Heart left ventricle (tissue), 16 donors: ENCODE measurements at regions of chr7 and their contacts with region 1.

Region 1: DNA sequence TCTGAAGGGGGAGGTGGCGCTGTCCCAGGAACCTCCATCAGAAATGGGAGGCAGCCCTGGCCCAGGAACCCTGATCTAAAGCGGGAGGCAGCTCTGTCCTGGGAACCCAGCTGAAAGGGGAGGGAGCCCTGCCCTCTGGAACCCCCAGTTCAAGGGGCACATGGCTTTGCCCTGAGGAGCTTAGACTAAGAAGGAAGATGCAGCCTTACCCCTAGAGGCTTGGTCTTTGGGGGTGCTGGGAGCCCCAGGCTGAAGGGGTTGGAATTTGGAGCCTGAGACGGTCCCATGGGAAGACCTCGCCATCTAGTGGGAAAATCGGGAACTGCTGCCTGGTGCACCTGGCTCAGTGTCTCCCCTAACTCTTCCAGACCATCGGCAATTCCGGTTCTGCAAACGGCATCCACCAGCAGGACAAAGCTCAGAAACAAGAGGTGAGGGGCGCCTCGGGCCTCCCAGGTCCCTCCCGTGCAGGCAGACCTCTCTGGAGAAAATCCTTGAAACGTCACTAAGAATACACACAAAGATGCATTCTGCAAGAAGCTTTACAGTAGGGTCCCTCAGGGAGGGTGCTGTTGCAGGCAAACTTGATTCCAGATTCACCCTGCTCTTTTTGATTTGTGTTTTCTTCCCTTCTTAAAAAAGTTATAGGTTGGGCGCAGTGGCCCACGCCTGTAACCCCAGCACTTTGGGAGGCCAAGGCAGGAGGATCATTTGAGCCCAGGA is 52.4 kb upstream of the GTF2IRD1 start:
- DNase-seq: peak; percentile 47 to 72 (median 59)
- ATAC-seq: peak in 3 of 4 donors; percentile 58 to 65 (median 62)
- H3K4me3 ChIP-seq: no peak overlapping the region
- H3K27ac ChIP-seq: no peak overlapping the region
- H3K4me1 ChIP-seq: no peaks in the 10 kb centered on the region
- H3K27me3 ChIP-seq: no peaks in the 10 kb centered on the region
- CTCF ChIP-seq: peak; percentile 91 to 98 (median 96)
- POLR2A ChIP-seq: no peak

Region 2: DNA sequence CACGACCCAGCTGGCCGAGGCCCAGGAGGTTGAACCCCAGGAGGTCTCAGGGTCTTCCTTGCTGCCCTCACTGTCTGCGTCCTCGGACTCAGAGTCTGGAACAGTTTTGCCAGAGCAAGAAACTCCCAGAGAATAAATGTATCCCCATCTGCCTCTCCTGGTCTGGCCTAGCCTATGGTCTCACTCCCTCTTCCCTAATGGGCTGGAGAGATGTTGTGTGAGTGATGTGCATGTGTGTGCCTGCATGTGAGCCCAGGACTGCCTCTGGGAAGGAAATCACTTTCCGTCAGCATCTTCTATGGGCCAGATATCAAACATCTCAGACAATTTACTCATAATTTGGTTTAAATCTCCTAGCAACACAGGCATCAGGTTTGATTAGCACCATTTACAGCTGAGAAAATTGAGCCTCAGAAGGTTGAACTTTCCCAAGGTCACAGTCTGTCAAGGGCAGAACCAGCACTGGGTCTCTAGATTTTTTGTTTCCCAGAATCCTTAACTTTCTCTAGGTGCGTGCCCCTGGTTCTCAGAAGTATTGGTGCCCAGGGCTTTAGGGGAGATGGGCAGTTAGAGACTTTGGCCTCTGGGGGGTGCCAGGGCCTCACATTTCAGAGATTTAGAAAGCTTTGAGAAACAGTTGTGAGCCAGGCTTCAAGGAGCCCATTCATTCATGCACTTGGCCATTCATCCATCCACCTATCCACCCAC is 535.4 kb before region 1 on chr7:
- intact Hi-C with region 1: loop called in 6 of 10 experiments (anchors 5 to 10 kb)
- DNase-seq: peak in 1 of 5 donors; percentile 57
- ATAC-seq: peak; percentile 39 to 77 (median 76)
- H3K4me3 ChIP-seq: no peak overlapping the region
- H3K27ac ChIP-seq: no peak overlapping the region
- H3K4me1 ChIP-seq: peaks cover 0 to 17% (median 8%) of the 10 kb centered on the region in 12 donors
- H3K27me3 ChIP-seq: no peaks in the 10 kb centered on the region
- CTCF ChIP-seq: peak; percentile 55 to 77 (median 68)
- POLR2A ChIP-seq: no peak

Region 3: GRCh38 chr7:74068393-74069085 is 332.8 kb before region 1 on chr7:
- intact Hi-C with region 1: loop called in 9 of 10 experiments (anchors 2 to 5 kb)
- DNase-seq: peak in 2 of 5 donors; percentile 42 to 58
- ATAC-seq: peak in 1 of 4 donors; percentile 37
- H3K4me3 ChIP-seq: no peak overlapping the region
- H3K27ac ChIP-seq: no peak overlapping the region
- H3K4me1 ChIP-seq: no peaks in the 10 kb centered on the region
- H3K27me3 ChIP-seq: no peaks in the 10 kb centered on the region
- CTCF ChIP-seq: no peak
- POLR2A ChIP-seq: no peak

Region 4: GRCh38 chr7:74121401-74122249 is 279.7 kb before region 1 on chr7:
- intact Hi-C with region 1: no loop called
- DNase-seq: no peak
- ATAC-seq: peak in 1 of 4 donors; percentile 14
- H3K4me3 ChIP-seq: no peak overlapping the region
- H3K27ac ChIP-seq: no peak overlapping the region
- H3K4me1 ChIP-seq: no peaks in the 10 kb centered on the region
- H3K27me3 ChIP-seq: no peaks in the 10 kb centered on the region
- CTCF ChIP-seq: no peak
- POLR2A ChIP-seq: no peak

Region 5: GRCh38 chr7:74183613-74184450 is 217.5 kb before region 1 on chr7:
- intact Hi-C with region 1: no loop called
- DNase-seq: no peak
- ATAC-seq: peak in 2 of 4 donors; percentile 17 to 23
- H3K4me3 ChIP-seq: no peak overlapping the region
- H3K27ac ChIP-seq: peak overlapping the region in 3 of 12 donors; percentile 25 to 40 (median 32)
- H3K4me1 ChIP-seq: peaks cover 16 to 97% (median 86%) of the 10 kb centered on the region in 12 donors
- H3K27me3 ChIP-seq: no peaks in the 10 kb centered on the region
- CTCF ChIP-seq: peak in 3 of 12 donors; percentile 5 to 35 (median 14)
- POLR2A ChIP-seq: no peak

Region 6: GRCh38 chr7:74206589-74207120 is 194.6 kb before region 1 on chr7:
- intact Hi-C with region 1: loop called (anchors 2 to 5 kb)
- DNase-seq: peak; percentile 82 to 94 (median 86)
- ATAC-seq: peak; percentile 62 to 87 (median 83)
- H3K4me3 ChIP-seq: peak overlapping the region in 8 of 12 donors; percentile 17 to 53 (median 25)
- H3K27ac ChIP-seq: no peak overlapping the region
- H3K4me1 ChIP-seq: peaks cover 0 to 18% (median 0%) of the 10 kb centered on the region in 12 donors
- H3K27me3 ChIP-seq: no peaks in the 10 kb centered on the region
- CTCF ChIP-seq: peak; percentile 96 to 99 (median 98)
- POLR2A ChIP-seq: no peak

Region 7: DNA sequence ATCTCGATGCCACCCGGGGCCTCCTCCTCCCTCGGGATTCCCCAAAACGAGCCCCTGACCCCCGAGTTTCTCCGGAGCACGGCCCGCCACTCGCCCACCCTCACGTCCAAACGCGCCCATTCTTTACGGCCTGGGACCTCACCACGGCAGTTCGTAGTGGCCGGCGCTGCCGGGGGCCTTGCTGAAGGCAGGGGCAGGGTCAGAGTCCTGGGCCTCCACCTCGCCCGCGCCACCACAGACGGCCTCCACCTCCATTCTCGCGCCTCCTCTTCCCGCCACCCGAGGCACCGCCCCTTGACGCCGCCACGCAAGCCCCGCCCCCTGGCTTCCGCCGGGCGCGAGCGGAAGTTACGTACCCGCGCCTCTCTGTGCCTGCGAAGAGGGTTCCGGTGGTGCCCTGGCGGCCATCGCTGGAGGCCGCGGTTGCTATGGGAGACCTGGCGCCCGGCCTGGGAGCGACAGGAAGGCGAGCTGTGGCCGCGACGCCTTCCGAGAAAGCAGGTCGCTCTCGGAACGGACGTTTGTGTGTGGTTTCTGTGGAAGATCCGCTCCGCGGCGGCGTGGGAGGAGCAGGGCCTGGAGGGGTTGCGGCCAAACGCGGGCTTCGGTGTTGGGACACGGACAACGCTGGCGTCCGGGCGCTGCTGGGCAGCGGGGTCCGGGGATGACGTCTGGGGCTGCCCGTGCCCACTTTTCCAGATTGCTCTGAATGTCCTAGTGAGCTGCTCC is 147.0 kb before region 1 on chr7 and contains the start of gene RFC2:
- intact Hi-C with region 1: loop called in 1 of 10 experiments (anchors 10 kb)
- DNase-seq: peak; percentile 97 to 99 (median 98)
- ATAC-seq: peak; percentile 98 to 100 (median 100)
- H3K4me3 ChIP-seq: peak within 1 kb of the TSS; percentile 64 to 98 (median 81)
- H3K27ac ChIP-seq: peak within 1 kb of the TSS; percentile 80 to 99 (median 95)
- H3K4me1 ChIP-seq: peaks cover 0 to 38% (median 24%) of the 10 kb centered on the region in 12 donors
- H3K27me3 ChIP-seq: no peaks in the 10 kb centered on the region
- CTCF ChIP-seq: peak in 11 of 12 donors; percentile 9 to 47 (median 27)
- POLR2A ChIP-seq: peak in 1 of 2 donors; percentile 64
- total RNA-seq, gene RFC2: 7.8 to 20.9 (median 12.2) TPM

Region 8: GRCh38 chr7:74275401-74275881 is 125.9 kb before region 1 on chr7:
- intact Hi-C with region 1: no loop called
- DNase-seq: no peak
- ATAC-seq: no peak
- H3K4me3 ChIP-seq: no peak overlapping the region
- H3K27ac ChIP-seq: peak overlapping the region in 1 of 12 donors; percentile 24
- H3K4me1 ChIP-seq: peaks cover 0 to 41% (median 24%) of the 10 kb centered on the region in 12 donors
- H3K27me3 ChIP-seq: no peaks in the 10 kb centered on the region
- CTCF ChIP-seq: peak; percentile 11 to 52 (median 36)
- POLR2A ChIP-seq: no peak

Region 9: GRCh38 chr7:74489997-74490945 is 89.0 kb after region 1 on chr7:
- intact Hi-C with region 1: no loop called
- DNase-seq: no peak
- ATAC-seq: peak in 1 of 4 donors; percentile 12
- H3K4me3 ChIP-seq: no peak overlapping the region
- H3K27ac ChIP-seq: no peak overlapping the region
- H3K4me1 ChIP-seq: peaks cover 0 to 4% (median 0%) of the 10 kb centered on the region in 12 donors
- H3K27me3 ChIP-seq: no peaks in the 10 kb centered on the region
- CTCF ChIP-seq: no peak
- POLR2A ChIP-seq: no peak